HEK293 (cell line): ENCODE measurements at regions of chr12 and their contacts with region 1.

Region 1: DNA sequence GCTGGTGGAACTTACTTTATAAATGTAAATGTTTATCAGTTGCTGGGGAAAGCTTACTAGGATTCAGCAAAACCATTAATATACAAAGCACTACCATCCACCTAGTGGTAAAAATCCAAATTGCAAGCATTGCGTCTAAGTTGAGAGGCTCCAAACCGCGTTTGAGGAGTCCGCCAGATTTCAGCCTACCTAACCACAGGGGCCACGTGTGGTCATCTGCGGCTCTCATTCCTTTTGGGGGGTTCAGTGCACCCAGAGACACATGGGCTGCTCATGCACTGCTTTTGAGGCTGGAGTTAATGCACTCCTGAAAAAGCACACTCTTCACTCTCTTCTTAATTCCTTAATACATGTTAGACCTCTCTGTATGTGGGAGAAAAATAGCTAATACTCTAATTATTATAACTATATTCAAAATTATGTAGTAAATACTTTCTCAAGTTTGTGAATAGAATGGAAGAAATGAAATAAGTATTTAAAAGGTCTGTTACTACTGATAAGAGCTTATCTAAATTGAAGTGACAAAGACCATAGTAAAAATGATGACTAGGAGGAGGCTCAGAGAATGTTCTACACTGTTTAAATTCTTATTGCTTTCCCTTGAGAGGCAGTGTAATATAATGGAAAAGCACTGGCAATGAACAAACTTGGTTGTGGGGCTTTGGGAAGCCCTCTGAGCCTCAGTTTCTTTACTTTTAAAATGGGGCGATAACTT is 41.4 kb upstream of the MANSC4 start:
- H3K4me3 ChIP-seq: no peak overlapping the region
- H3K27ac ChIP-seq: no peak overlapping the region
- H3K4me1 ChIP-seq: no peaks in the 10 kb centered on the region
- CTCF ChIP-seq: no peak

Region 2: GRCh38 chr12:27710592-27711316 is 110.7 kb before region 1 on chr12 and contains the start of gene MRPS35:
- CTCF ChIA-PET with region 1: no interaction called
- POLR2A ChIA-PET with region 1: no interaction called
- H3K4me3 ChIP-seq: peak within 1 kb of the TSS; percentile 93
- H3K27ac ChIP-seq: peak within 1 kb of the TSS; percentile 64
- H3K4me1 ChIP-seq: 0 out of 2 replicates have a peak, but pooled peaks cover 2% of the 10 kb centered on the region
- CTCF ChIP-seq: peak; percentile 77

Region 3: GRCh38 chr12:27805238-27805637 is 16.2 kb before region 1 on chr12:
- CTCF ChIA-PET with region 1: interaction called, 10 read pairs
- POLR2A ChIA-PET with region 1: no interaction called
- H3K4me3 ChIP-seq: no peak overlapping the region
- H3K27ac ChIP-seq: no peak overlapping the region
- H3K4me1 ChIP-seq: 0 out of 2 replicates have a peak, but pooled peaks cover 2% of the 10 kb centered on the region
- CTCF ChIP-seq: no peak

Region 4: GRCh38 chr12:27810756-27811155 is 10.7 kb before region 1 on chr12:
- CTCF ChIA-PET with region 1: interaction called, 13 read pairs
- POLR2A ChIA-PET with region 1: no interaction called
- H3K4me3 ChIP-seq: no peak overlapping the region
- H3K27ac ChIP-seq: no peak overlapping the region
- H3K4me1 ChIP-seq: no peaks in the 10 kb centered on the region
- CTCF ChIP-seq: no peak